Mammary epithelial cell (primary cell): ENCODE measurements at regions of chr3 and their contacts with region 1.

Region 1: DNA sequence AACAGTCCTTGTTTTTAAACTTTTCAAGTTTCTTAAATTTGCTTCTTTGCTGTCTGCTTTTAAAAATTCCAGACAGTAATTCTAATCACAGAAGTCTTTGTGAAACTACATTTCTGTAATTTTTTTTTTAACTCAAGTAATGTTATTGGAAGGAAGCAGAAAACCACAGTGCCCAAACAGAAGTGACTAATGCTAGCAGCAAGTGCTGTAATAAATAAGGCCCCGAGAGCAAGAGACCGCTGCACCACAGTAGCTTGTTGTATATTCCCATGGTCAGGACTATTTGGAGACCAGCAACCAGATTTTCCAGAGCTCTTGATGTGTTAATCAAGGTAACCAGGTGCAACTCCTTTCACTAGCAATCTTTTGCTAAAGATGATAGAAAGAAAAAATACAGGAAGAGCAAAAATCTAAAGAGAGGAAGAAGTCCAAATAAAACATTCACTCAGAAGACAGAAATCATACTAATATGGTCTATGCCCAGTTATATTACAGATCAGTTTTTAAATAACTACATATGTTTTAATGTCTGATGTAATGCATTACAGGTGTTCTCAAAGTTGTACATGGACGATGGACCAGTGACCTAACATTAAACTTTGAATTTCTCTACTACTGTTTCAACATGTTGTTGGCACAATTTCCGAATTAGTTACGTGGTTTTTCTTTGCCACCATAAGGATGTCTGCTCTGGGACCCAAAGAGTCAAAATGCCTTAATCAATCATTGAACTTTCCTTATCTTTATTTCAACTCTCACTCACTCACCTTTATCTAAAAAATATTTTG is 36.4 kb downstream of the WWTR1 start:
- DNase-seq: peak; percentile 86
- H3K4me3 ChIP-seq: no peak overlapping the region
- H3K27ac ChIP-seq: peak overlapping the region; percentile 46
- H3K4me1 ChIP-seq: peaks cover 51% of the 10 kb centered on the region
- H3K27me3 ChIP-seq: no peaks in the 10 kb centered on the region
- CTCF ChIP-seq: no peak

Region 2: DNA sequence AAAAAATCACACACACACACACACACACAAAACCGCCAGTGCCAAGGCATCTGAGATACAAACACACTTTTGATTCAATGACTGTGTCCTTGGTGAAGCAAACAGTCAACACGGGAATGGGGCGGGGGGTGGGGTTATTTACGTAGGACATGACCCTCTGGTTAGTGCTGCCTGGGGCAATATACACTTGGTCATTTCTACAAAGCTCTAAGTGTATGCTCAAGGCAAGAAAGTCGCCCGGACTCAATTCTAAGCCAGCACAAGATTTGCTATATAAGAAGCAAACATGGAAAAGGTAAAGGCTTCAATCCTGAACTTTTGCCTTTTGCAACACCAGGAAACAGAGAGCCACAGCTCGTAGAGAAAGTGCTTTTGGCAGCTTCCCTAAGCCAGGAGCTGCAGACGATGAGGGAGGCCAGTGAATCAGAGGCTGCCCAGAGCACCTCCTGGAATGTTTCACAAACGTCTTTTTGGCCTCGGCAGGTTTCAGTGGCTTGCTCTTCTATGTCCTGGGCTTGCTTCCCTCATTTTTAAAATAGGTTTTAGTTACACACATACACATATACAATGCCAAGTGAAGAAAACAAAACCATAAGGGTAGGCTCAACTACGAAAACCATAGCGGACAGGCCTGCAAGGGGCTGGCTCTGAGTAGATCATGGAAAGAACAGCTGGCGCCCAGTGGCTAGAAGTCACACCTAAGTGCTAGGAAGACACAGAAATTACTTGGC is 73.3 kb before region 1 on chr3:
- CTCF ChIA-PET with region 1: no interaction called
- dilution Hi-C with region 1: no loop called
- in situ Hi-C with region 1: no loop called
- intact Hi-C with region 1: no loop called
- DNase-seq: peak; percentile 86
- H3K4me3 ChIP-seq: peak overlapping the region in 1 of 3 experiments; percentile 16
- H3K27ac ChIP-seq: peak overlapping the region; percentile 88
- H3K4me1 ChIP-seq: peaks cover 28% of the 10 kb centered on the region
- H3K27me3 ChIP-seq: no peaks in the 10 kb centered on the region
- CTCF ChIP-seq: no peak

Region 3: DNA sequence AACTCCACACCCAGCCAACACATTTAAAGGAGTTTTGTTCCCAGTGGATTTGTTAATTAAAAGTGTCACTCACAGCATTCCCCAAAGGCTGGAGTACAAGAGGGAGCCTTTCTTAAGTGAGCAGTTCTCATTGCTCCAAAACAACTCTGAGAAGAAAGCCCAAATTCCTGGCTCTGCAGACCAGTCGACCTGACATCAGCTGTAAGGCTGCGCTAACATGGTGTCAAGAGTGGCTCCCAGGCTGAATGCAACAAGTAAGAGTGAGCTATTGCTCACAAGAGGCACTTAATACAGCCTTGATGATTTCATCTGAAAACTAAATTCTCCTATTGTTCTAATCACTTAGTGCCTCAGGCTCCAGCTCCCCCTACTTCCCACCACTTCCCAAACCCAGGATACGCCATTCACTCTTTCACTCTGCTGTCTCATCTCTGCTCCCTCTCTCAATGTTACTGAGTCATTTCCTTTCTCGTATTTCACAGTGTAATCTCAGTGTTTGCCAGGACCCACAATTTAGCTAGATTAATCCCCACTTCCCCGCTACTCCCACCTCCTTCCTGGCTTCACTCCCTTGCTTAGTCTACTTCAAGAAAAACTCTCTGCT is 45.3 kb before region 1 on chr3:
- CTCF ChIA-PET with region 1: no interaction called
- dilution Hi-C with region 1: loop called (anchors 5 kb)
- in situ Hi-C with region 1: no loop called
- intact Hi-C with region 1: loop called (anchors 2 kb)
- DNase-seq: peak; percentile 99
- H3K4me3 ChIP-seq: no peak overlapping the region
- H3K27ac ChIP-seq: peak overlapping the region; percentile 97
- H3K4me1 ChIP-seq: peaks cover 89% of the 10 kb centered on the region
- H3K27me3 ChIP-seq: no peaks in the 10 kb centered on the region
- CTCF ChIP-seq: no peak

Region 4: DNA sequence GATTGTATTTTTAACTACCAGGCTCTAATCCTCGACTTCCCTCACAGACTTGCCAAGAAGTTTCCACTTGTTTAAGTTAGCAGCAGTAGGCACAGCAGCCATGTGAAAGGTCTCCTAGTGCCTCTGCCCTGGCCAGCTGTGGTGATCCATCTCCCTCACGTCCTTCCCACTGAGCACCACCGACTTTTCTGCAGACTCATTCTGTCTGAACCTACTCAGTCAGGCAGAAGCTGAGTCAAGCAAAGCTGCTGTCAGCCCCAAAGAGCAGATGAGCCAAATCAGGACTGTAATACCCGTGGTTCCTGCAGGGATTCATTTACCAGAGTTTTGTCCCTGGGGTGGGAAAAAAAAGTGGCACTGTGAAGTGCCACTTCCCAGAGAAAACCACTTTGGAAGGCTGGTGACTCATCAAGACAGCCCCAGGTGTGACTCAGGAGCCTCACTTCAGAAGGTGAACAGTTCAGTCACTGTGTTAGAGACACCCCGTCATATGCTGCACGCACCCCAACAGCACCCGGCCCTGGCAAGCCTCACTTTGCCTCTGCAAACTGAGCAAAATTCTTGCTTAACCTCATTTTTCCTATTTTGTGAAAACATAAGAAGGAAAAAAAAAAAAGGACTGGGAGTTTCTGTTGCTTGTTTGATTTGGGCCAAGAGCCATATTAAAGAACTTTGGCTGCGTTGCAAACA is 39.6 kb before region 1 on chr3:
- CTCF ChIA-PET with region 1: no interaction called
- dilution Hi-C with region 1: loop called (anchors 5 kb)
- in situ Hi-C with region 1: no loop called
- intact Hi-C with region 1: loop called (anchors 2 kb)
- DNase-seq: peak; percentile 98
- H3K4me3 ChIP-seq: peak overlapping the region in 1 of 3 experiments; percentile 2
- H3K27ac ChIP-seq: peak overlapping the region; percentile 98
- H3K4me1 ChIP-seq: peaks cover 87% of the 10 kb centered on the region
- H3K27me3 ChIP-seq: no peaks in the 10 kb centered on the region
- CTCF ChIP-seq: no peak

Region 5: GRCh38 chr3:149752051-149752787 is 130.8 kb after region 1 on chr3 and contains the start of gene COMMD2:
- CTCF ChIA-PET with region 1: no interaction called
- dilution Hi-C with region 1: no loop called
- in situ Hi-C with region 1: no loop called
- intact Hi-C with region 1: no loop called
- DNase-seq: peak; percentile 92
- H3K4me3 ChIP-seq: peak within 1 kb of the TSS; percentile 85 to 100 (median 98)
- H3K27ac ChIP-seq: peak within 1 kb of the TSS; percentile 75
- H3K4me1 ChIP-seq: peaks cover 17% of the 10 kb centered on the region
- H3K27me3 ChIP-seq: no peaks in the 10 kb centered on the region
- CTCF ChIP-seq: peak; percentile 27 to 37
- total RNA-seq, gene COMMD2: 29.3 to 38.8 TPM

Region 6: DNA sequence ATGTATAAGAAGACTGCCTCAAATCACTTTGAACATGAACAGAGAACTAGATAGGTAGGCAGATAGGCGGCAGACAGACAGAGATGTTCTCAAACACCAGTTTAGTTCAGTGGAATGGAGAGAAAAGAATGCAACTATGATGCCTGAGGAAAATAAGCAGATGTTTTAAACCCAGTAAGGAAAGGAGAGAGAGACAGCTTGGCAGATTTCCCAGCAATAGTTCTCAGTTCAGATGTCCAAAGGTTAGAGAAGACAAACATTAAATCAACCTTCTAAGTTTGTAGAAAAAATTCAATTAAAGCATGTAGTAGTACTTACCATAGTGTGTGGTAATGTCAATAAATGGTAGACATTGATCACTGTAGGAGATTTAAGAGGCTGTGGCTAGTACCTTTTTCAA is 558.9 kb after region 1 on chr3:
- CTCF ChIA-PET with region 1: no interaction called
- dilution Hi-C with region 1: no loop called
- in situ Hi-C with region 1: no loop called
- intact Hi-C with region 1: no loop called
- DNase-seq: no peak
- H3K4me3 ChIP-seq: no peak overlapping the region
- H3K27ac ChIP-seq: no peak overlapping the region
- H3K4me1 ChIP-seq: peaks cover 12% of the 10 kb centered on the region
- H3K27me3 ChIP-seq: no peaks in the 10 kb centered on the region
- CTCF ChIP-seq: no peak